B cell (primary cell): ENCODE measurements at regions of chr6 and their contacts with region 1.

Region 1: GRCh38 chr6:30646458-30647241 is at the start of gene C6orf136:
- DNase-seq: peak; percentile 95
- ATAC-seq: peak; percentile 77
- H3K4me3 ChIP-seq: peak within 1 kb of the TSS; percentile 24 to 93 (median 80)
- H3K4me3 Mint-ChIP-seq: peak within 1 kb of the TSS; percentile 89
- H3K27ac ChIP-seq: peak within 1 kb of the TSS; percentile 76 to 89
- H3K27ac Mint-ChIP-seq: peak within 1 kb of the TSS; percentile 95
- H3K4me1 ChIP-seq: peaks cover 12 to 21% of the 10 kb centered on the region in 2 donors
- H3K4me1 Mint-ChIP-seq: peaks cover 28% of the 10 kb centered on the region
- H3K27me3 ChIP-seq: no peaks in the 10 kb centered on the region
- H3K27me3 Mint-ChIP-seq: no peaks in the 10 kb centered on the region
- CTCF ChIP-seq: no peak
- total RNA-seq, gene C6orf136: 24.9 and 37.2 TPM in 2 replicates

Region 2: DNA sequence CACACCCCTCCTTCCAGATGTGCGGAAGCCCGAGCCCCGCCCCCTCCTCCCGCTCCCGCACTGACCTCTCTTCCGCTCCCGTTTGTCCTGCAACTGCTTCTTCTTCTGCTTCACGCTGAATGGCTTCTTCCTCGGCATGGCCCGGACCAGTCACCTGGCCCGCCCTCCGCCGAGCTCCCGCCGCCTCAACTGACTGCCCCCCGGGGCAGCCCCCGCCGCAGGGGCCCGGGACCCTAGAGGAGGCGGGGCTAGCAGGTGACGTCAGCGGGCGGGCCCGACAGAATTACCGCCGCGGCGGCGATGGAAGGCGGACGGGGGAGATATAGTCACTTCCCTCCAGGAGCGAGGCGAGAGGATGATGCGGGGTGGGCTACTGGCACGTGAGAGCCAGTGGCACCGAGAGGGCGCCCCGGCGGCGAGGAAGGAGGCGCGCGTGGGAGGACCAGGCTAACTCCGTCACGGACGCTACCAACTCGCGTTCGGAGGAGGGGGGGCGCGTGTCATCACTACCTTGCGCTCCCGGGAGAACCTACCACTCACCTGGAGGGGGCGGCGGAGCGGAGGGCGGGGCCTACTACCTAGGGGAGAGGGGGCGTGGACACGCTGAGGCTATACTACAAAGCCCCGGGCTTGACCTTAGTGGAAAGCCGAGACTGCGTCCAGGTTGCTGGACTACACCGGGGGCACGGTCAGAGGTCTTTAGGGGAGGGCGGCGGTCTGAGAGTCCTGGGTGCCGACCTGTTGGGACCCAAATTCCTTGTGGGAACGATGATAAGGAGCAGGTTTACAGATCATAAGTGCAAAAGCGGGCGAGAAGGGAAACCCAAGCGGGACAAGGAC is 90.4 kb before region 1 on chr6 and contains the start of gene GNL1:
- CTCF ChIA-PET with region 1: no interaction called
- POLR2A ChIA-PET with region 1: interaction called, 4 read pairs
- intact Hi-C with region 1: loop called (anchors 1 kb)
- DNase-seq: peak; percentile 100
- ATAC-seq: peak; percentile 89
- H3K4me3 ChIP-seq: peak within 1 kb of the TSS; percentile 81 to 100 (median 94)
- H3K4me3 Mint-ChIP-seq: peak within 1 kb of the TSS; percentile 99
- H3K27ac ChIP-seq: peak within 1 kb of the TSS; percentile 91 to 95
- H3K27ac Mint-ChIP-seq: peak within 1 kb of the TSS; percentile 99
- H3K4me1 ChIP-seq: peaks cover 19 to 27% of the 10 kb centered on the region in 2 donors
- H3K4me1 Mint-ChIP-seq: peaks cover 32% of the 10 kb centered on the region
- H3K27me3 ChIP-seq: no peaks in the 10 kb centered on the region
- H3K27me3 Mint-ChIP-seq: no peaks in the 10 kb centered on the region
- CTCF ChIP-seq: no peak
- total RNA-seq, gene GNL1: 107 and 109 TPM in 2 replicates

Region 3: GRCh38 chr6:30626484-30627366 is 19.9 kb before region 1 on chr6 and contains the start of gene ATAT1:
- CTCF ChIA-PET with region 1: no interaction called
- POLR2A ChIA-PET with region 1: no interaction called
- intact Hi-C with region 1: loop called (anchors 1 kb)
- DNase-seq: peak; percentile 93
- ATAC-seq: peak; percentile 99
- H3K4me3 ChIP-seq: peak within 1 kb of the TSS; percentile 60 to 87 (median 72)
- H3K4me3 Mint-ChIP-seq: peak within 1 kb of the TSS; percentile 93
- H3K27ac ChIP-seq: peak within 1 kb of the TSS; percentile 84 to 87
- H3K27ac Mint-ChIP-seq: peak within 1 kb of the TSS; percentile 89
- H3K4me1 ChIP-seq: peaks cover 12 to 18% of the 10 kb centered on the region in 2 donors
- H3K4me1 Mint-ChIP-seq: peaks cover 19% of the 10 kb centered on the region
- H3K27me3 ChIP-seq: no peaks in the 10 kb centered on the region
- H3K27me3 Mint-ChIP-seq: no peaks in the 10 kb centered on the region
- CTCF ChIP-seq: peak; percentile 64
- total RNA-seq, gene ATAT1: 19.3 and 21.5 TPM in 2 replicates